ENCODE measurements at regions of chr10 and their contacts with region 1.

Region 1: GRCh38 chr10:124388823-124389612 is 29.7 kb downstream of the OAT start:
- DNase-seq: peak; percentile 85
- H3K4me3 Mint-ChIP-seq: peak overlapping the region; percentile 5
- H3K27ac Mint-ChIP-seq: no peak overlapping the region
- H3K4me1 Mint-ChIP-seq: no peaks in the 10 kb centered on the region
- H3K27me3 Mint-ChIP-seq: peaks cover 3% of the 10 kb centered on the region

Region 2: DNA sequence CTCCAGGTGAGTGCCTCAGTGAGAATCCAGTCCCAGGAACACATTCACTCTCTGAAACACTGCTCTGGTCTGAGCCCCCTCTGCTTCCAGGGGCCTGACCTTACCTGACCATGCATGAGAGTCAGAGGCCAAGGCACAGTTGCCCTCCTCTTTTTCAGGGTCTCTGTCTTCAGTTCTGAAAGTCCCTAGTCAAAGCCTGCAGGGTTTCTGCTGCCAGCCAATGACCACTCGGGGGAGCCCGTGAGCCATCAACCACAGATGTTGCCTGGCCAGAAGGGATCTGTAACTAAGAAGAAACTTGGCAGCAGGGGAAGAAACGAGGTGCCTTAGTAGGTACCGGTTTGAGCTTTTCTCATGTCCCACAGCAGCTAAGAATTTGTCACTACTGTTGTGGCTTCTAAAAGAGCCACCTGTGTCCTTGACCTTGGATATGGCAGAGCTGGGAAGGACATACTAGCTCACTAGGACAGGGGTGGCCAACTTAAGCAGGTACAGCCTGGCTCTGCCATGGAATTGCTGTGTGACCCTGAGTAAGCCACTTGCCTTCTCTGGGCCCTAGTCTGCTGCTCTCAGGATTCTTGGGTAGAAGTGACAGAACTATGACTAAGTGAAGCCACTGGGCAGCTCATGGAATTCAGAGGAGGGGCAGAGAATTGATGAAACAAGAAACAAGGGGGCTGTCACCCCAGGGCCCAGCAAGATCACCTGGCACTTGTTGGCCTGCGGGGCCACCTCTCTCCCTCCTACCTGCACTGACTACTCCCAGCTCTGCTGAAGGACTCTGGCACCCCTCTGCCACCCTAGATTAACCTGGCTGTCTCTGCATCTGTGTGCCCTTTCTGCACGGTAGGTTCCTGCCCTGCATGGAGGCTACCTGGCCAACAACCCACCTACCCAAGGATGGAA is 806.7 kb before region 1 on chr10:
- intact Hi-C with region 1: loop called (anchors 2 kb)
- DNase-seq: peak; percentile 43
- H3K4me3 Mint-ChIP-seq: no peak overlapping the region
- H3K27ac Mint-ChIP-seq: no peak overlapping the region
- H3K4me1 Mint-ChIP-seq: no peaks in the 10 kb centered on the region
- H3K27me3 Mint-ChIP-seq: peaks cover 11% of the 10 kb centered on the region

Region 3: DNA sequence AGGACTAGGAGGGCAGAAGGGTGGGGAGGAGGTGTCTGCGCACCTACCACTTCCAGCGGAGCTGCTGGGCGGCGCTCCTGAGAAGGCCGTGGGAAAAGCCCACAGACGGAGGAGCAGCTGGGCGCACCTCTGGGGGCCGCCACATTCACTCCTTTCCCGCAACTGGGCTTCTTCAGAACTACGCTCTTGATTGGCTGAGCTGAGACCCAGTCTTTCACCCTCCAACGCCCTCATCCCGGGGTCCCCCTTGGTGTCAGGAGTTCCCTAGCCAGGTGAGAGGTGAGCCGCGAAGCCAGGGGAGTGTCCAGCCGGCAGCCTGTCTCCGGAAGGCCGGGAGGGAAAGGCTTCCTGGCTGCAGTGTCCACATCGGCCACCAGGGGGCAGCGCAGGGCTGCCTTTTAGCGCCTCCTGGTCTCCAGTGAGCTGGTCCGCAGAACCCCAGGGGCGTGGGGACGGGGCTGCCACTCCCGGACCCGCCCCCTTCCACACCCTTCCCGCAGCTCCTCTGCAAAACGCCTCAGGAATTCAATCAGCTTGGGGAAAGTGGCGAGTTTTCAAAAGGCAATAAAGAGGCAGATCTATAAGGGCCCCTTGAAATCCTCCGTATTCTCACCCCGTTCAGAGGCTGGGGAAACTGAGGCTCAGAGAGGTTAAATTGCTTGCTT is 394.5 kb before region 1 on chr10:
- intact Hi-C with region 1: loop called (anchors 1 kb)
- DNase-seq: peak; percentile 65
- H3K4me3 Mint-ChIP-seq: no peak overlapping the region
- H3K27ac Mint-ChIP-seq: no peak overlapping the region
- H3K4me1 Mint-ChIP-seq: peaks cover 6% of the 10 kb centered on the region
- H3K27me3 Mint-ChIP-seq: peaks cover 51% of the 10 kb centered on the region

Region 4: GRCh38 chr10:124224311-124225028 is 164.5 kb before region 1 on chr10:
- intact Hi-C with region 1: loop called (anchors 1 kb)
- DNase-seq: no peak
- H3K4me3 Mint-ChIP-seq: no peak overlapping the region
- H3K27ac Mint-ChIP-seq: no peak overlapping the region
- H3K4me1 Mint-ChIP-seq: peaks cover 14% of the 10 kb centered on the region
- H3K27me3 Mint-ChIP-seq: peaks cover 3% of the 10 kb centered on the region

Region 5: DNA sequence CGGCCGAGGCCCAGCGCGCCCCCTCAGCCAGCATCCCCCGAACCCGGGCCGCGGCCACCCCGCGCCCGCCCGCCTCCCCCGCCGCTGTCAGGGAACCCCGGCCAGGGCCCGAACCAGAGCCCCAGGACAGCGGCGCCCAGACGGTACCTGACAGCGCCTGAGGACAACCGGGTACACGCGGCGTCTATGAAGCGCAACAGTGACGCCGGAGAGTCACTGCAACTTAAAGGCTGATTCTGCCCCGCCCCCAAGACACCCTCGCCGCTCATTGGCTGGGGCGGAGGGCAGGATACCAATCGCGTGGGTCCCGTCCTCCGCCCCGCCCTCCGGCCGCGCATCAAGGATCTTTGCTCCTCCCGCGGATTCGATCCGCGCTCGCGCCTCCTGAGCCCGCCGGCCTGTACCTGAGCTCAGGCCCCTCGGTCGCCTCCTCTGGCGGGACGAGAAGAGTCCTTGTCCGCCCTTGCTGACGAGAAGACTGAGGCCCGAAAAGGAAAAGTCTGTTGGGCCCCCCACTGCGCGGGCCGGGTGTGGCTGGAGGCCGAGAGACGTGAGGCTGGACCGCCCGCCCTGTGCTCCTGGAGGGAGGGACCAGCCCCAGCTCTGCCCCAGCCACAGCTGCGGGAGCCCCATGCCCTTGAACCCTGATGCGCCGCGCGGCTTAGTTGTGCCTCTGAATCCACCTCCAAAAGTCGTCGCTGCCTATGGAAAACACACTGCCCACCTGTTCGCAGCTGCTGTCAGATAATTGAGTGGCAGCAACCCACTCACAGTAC is 29.9 kb after region 1 on chr10 and contains the start of gene OAT:
- intact Hi-C with region 1: loop called (anchors 1 kb)
- DNase-seq: peak; percentile 93
- H3K4me3 Mint-ChIP-seq: peak within 1 kb of the TSS; percentile 81
- H3K27ac Mint-ChIP-seq: no peak within 1 kb of the TSS
- H3K4me1 Mint-ChIP-seq: peaks cover 8% of the 10 kb centered on the region
- H3K27me3 Mint-ChIP-seq: peaks cover 10% of the 10 kb centered on the region
- total RNA-seq, gene OAT: 42.6 and 45.8 TPM in 2 replicates

Region 6: GRCh38 chr10:124461438-124462347 is 72.7 kb after region 1 on chr10 and contains the start of gene LHPP:
- intact Hi-C with region 1: loop called (anchors 2 kb)
- DNase-seq: peak; percentile 85
- H3K4me3 Mint-ChIP-seq: peak within 1 kb of the TSS; percentile 86
- H3K27ac Mint-ChIP-seq: peak within 1 kb of the TSS; percentile 92
- H3K4me1 Mint-ChIP-seq: peaks cover 22% of the 10 kb centered on the region
- H3K27me3 Mint-ChIP-seq: peaks cover 2% of the 10 kb centered on the region
- total RNA-seq, gene LHPP: 8.1 and 8.4 TPM in 2 replicates

Region 7: GRCh38 chr10:124588736-124589490 is 199.9 kb after region 1 on chr10:
- intact Hi-C with region 1: no loop called
- DNase-seq: no peak
- H3K4me3 Mint-ChIP-seq: no peak overlapping the region
- H3K27ac Mint-ChIP-seq: no peak overlapping the region
- H3K4me1 Mint-ChIP-seq: no peaks in the 10 kb centered on the region
- H3K27me3 Mint-ChIP-seq: peaks cover under 1% of the 10 kb centered on the region

Measured in activated T-helper 2 cell treated with anti-CD3 and anti-CD28 coated beads, Interferon-gamma antibody, Interleukin-2, Interleukin-4, amounts not matched to agents 10 μg/mL and 5 μg/mL and 100 μg/mL, durations not matched to agents 14 hours and 24 hours and 36 hours (primary cell).